PC-9 (cell line): ENCODE measurements at regions of chr9 and their contacts with region 1.

Region 1: GRCh38 chr9:107755284-107755683 is 265.7 kb upstream of the KLF4 start:
- DNase-seq: peak; percentile 85 to 99
- H3K4me3 ChIP-seq: 0 out of 2 replicates have a peak overlapping the region, but pooled peaks have one; percentile 20
- H3K27ac ChIP-seq: peak overlapping the region; percentile 99
- H3K4me1 ChIP-seq: peaks cover 60% of the 10 kb centered on the region
- H3K27me3 ChIP-seq: no peaks in the 10 kb centered on the region
- CTCF ChIP-seq: no peak

Region 2: GRCh38 chr9:107587191-107587963 is 167.9 kb before region 1 on chr9:
- CTCF ChIA-PET with region 1: no interaction called
- POLR2A ChIA-PET with region 1: no interaction called
- intact Hi-C with region 1: loop called (anchors 5 kb)
- DNase-seq: peak; percentile 39 to 50
- H3K4me3 ChIP-seq: peak overlapping the region; percentile 56; the same call in 1 of the 2 replicates
- H3K27ac ChIP-seq: peak overlapping the region; percentile 68
- H3K4me1 ChIP-seq: peaks cover 25% of the 10 kb centered on the region
- H3K27me3 ChIP-seq: no peaks in the 10 kb centered on the region
- CTCF ChIP-seq: no peak

Region 3: GRCh38 chr9:107711540-107711939 is 43.7 kb before region 1 on chr9:
- CTCF ChIA-PET with region 1: interaction called, 3 read pairs
- POLR2A ChIA-PET with region 1: interaction called, 6 read pairs
- intact Hi-C with region 1: loop called (anchors 1 kb)
- DNase-seq: peak; percentile 80 to 92
- H3K4me3 ChIP-seq: no peak overlapping the region
- H3K27ac ChIP-seq: peak overlapping the region; percentile 79
- H3K4me1 ChIP-seq: peaks cover 28% of the 10 kb centered on the region
- H3K27me3 ChIP-seq: no peaks in the 10 kb centered on the region
- CTCF ChIP-seq: no peak

Region 4: GRCh38 chr9:108002371-108002956 is 247.2 kb after region 1 on chr9:
- CTCF ChIA-PET with region 1: no interaction called
- POLR2A ChIA-PET with region 1: interaction called, 5 read pairs
- intact Hi-C with region 1: loop called (anchors 1 kb)
- DNase-seq: no peak
- H3K4me3 ChIP-seq: no peak overlapping the region
- H3K27ac ChIP-seq: no peak overlapping the region
- H3K4me1 ChIP-seq: no peaks in the 10 kb centered on the region
- H3K27me3 ChIP-seq: no peaks in the 10 kb centered on the region
- CTCF ChIP-seq: no peak

Region 5: DNA sequence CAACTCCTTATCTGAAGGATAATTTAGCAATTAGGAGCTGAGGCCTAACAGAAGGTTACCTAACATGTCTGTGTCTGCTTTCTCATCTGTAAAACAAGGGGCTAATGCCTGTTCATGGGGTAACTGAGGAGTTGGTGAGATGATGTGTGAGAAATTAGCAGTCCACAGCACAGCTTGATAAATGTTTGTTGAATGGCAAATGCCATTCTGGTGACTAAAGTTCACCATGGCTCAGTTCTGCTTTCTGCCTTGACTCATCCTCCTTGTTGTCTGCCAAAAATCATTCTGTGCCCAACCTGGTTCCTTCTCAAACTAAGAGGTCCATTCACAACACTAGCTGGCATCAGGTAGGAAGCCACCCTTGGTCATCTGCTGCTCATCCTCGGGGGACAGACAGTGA is 286.3 kb after region 1 on chr9:
- CTCF ChIA-PET with region 1: interaction called, 22 read pairs
- POLR2A ChIA-PET with region 1: no interaction called
- intact Hi-C with region 1: loop called (anchors 5 kb)
- DNase-seq: peak; percentile 35 to 81
- H3K4me3 ChIP-seq: no peak overlapping the region
- H3K27ac ChIP-seq: peak overlapping the region; percentile 79
- H3K4me1 ChIP-seq: peaks cover 36% of the 10 kb centered on the region
- H3K27me3 ChIP-seq: no peaks in the 10 kb centered on the region
- CTCF ChIP-seq: no peak

Region 6: GRCh38 chr9:108083796-108084352 is 328.6 kb after region 1 on chr9:
- CTCF ChIA-PET with region 1: no interaction called
- POLR2A ChIA-PET with region 1: no interaction called
- intact Hi-C with region 1: no loop called
- DNase-seq: no peak
- H3K4me3 ChIP-seq: no peak overlapping the region
- H3K27ac ChIP-seq: no peak overlapping the region
- H3K4me1 ChIP-seq: no peaks in the 10 kb centered on the region
- H3K27me3 ChIP-seq: no peaks in the 10 kb centered on the region
- CTCF ChIP-seq: no peak

Region 7: GRCh38 chr9:108099854-108100253 is 344.6 kb after region 1 on chr9:
- CTCF ChIA-PET with region 1: no interaction called
- POLR2A ChIA-PET with region 1: interaction called, 3 read pairs
- intact Hi-C with region 1: loop called (anchors 1 kb)
- DNase-seq: peak; percentile 64 to 96
- H3K4me3 ChIP-seq: no peak overlapping the region
- H3K27ac ChIP-seq: peak overlapping the region; percentile 89
- H3K4me1 ChIP-seq: peaks cover 30% of the 10 kb centered on the region
- H3K27me3 ChIP-seq: no peaks in the 10 kb centered on the region
- CTCF ChIP-seq: no peak

Region 8: GRCh38 chr9:108551030-108551838 is 796.0 kb after region 1 on chr9:
- CTCF ChIA-PET with region 1: no interaction called
- POLR2A ChIA-PET with region 1: no interaction called
- intact Hi-C with region 1: loop called (anchors 5 kb)
- DNase-seq: peak; percentile 75 to 99
- H3K4me3 ChIP-seq: peak overlapping the region; percentile 38; the same call in 1 of the 2 replicates
- H3K27ac ChIP-seq: peak overlapping the region; percentile 99
- H3K4me1 ChIP-seq: peaks cover 59% of the 10 kb centered on the region
- H3K27me3 ChIP-seq: no peaks in the 10 kb centered on the region
- CTCF ChIP-seq: no peak